IMR-90 (cell line): ENCODE measurements at regions of chr3 and their contacts with region 1.

Region 1: GRCh38 chr3:59660852-59661625 is 611.2 kb upstream of the CFAP20DC start:
- DNase-seq: peak; percentile 8
- ATAC-seq: peak; percentile 9; the same call in 1 of the 2 replicates
- H3K4me3 ChIP-seq: no peak overlapping the region
- H3K27ac ChIP-seq: peak overlapping the region; percentile 84; the same call in 1 of the 2 replicates
- H3K4me1 ChIP-seq: peaks cover 25% of the 10 kb centered on the region
- H3K27me3 ChIP-seq: no peaks in the 10 kb centered on the region
- CTCF ChIP-seq: no peak
- POLR2A ChIP-seq: no peak
- RAD21 ChIP-seq: no peak

Region 2: GRCh38 chr3:59749291-59749690 is 88.3 kb after region 1 on chr3:
- CTCF ChIA-PET with region 1: no interaction called
- POLR2A ChIA-PET with region 1: interaction called, 13 read pairs
- dilution Hi-C with region 1: no loop called
- in situ Hi-C with region 1: no loop called
- intact Hi-C with region 1: no loop called
- DNase-seq: peak; percentile 79
- ATAC-seq: peak; percentile 79
- H3K4me3 ChIP-seq: no peak overlapping the region
- H3K27ac ChIP-seq: peak overlapping the region; percentile 84; the same call in 1 of the 2 replicates
- H3K4me1 ChIP-seq: peaks cover 17% of the 10 kb centered on the region
- H3K27me3 ChIP-seq: no peaks in the 10 kb centered on the region
- CTCF ChIP-seq: no peak
- POLR2A ChIP-seq: no peak
- RAD21 ChIP-seq: no peak

Region 3: DNA sequence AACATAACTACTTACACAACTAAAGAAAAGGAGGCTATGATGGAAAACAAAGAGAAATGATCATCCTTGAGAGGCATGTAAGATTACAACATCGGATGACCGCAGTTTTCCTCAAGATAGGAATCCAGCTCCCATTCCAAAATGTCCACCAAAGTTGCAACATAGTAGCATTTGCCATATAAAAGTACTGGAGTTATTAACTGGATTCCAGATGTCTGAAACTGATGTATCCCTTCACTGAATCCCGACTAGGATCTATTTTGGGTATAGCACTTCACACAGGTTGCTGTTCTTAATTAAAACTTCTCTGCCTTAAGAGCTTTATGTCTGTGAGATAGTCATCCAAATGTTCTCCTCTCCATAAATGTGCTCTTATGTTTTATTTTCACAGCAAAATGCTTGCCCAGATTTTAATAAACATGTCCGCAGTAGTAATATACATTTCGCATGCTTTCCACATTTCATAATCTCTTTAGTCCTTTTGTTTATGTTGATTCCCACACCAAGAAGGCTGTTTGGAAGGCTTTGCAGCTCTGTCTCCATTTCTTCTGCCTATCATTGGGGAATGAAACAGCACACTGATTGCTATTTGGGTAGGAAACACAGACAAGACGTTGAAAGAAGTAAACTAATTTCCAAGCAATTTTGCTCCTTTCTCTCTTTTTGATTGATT is 105.3 kb after region 1 on chr3:
- CTCF ChIA-PET with region 1: no interaction called
- POLR2A ChIA-PET with region 1: no interaction called
- dilution Hi-C with region 1: no loop called
- in situ Hi-C with region 1: no loop called
- intact Hi-C with region 1: loop called (anchors 2 kb)
- DNase-seq: peak; percentile 93
- ATAC-seq: peak; percentile 73
- H3K4me3 ChIP-seq: no peak overlapping the region
- H3K27ac ChIP-seq: peak overlapping the region; percentile 95; the same call in 1 of the 2 replicates
- H3K4me1 ChIP-seq: peaks cover 12% of the 10 kb centered on the region
- H3K27me3 ChIP-seq: no peaks in the 10 kb centered on the region
- CTCF ChIP-seq: no peak
- POLR2A ChIP-seq: no peak
- RAD21 ChIP-seq: no peak

Region 4: GRCh38 chr3:59791774-59792308 is 130.8 kb after region 1 on chr3:
- CTCF ChIA-PET with region 1: no interaction called
- POLR2A ChIA-PET with region 1: no interaction called
- dilution Hi-C with region 1: no loop called
- in situ Hi-C with region 1: no loop called
- intact Hi-C with region 1: no loop called
- DNase-seq: no peak
- ATAC-seq: no peak
- H3K4me3 ChIP-seq: no peak overlapping the region
- H3K27ac ChIP-seq: no peak overlapping the region
- H3K4me1 ChIP-seq: peaks cover 3% of the 10 kb centered on the region; the same call in 1 of the 2 replicates
- H3K27me3 ChIP-seq: no peaks in the 10 kb centered on the region
- CTCF ChIP-seq: no peak
- POLR2A ChIP-seq: no peak
- RAD21 ChIP-seq: no peak